GM12878 (cell line): ENCODE measurements at regions of chr6 and their contacts with region 1.

Region 1: DNA sequence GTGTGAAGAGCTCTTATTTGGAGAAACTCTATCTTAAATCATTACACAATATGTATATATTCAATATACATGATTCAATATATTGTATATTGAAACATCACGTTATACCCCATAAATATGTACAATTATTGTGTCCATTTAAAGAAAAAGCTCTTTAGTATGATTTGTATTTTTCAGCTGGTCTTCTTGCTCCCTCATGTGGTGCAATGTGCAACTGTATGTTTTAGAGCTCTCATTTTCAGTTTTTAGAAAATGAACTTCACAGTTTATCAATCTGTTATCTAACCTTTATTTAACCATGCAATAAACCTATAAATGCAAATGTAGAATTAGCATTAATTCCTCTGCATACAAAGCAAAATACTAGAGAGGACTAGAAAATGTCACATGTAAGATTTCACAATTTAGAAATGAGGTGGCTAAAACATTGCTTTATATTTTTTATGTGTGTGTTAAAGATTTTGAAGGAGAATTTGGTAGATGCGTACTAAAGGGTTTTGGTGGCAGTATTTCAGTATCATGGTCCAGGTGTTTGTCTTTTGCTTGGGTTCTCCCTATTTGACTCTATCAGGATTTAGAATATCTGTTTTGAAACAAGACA is 167.1 kb downstream of the PHF3 start:
- DNase-seq: no peak
- ATAC-seq: peak; percentile 43; the same call in 1 of the 3 replicates
- H3K4me3 ChIP-seq: no peak overlapping the region
- H3K27ac ChIP-seq: no peak overlapping the region
- H3K4me1 ChIP-seq: no peaks in the 10 kb centered on the region
- H3K27me3 ChIP-seq: no peaks in the 10 kb centered on the region
- CTCF ChIP-seq: peak; percentile 54 to 64 (median 60); a peak in 5 of 6 replicates
- EP300 ChIP-seq: no peak
- POLR2A ChIP-seq: no peak
- RAD21 ChIP-seq: peak; percentile 89

Region 2: DNA sequence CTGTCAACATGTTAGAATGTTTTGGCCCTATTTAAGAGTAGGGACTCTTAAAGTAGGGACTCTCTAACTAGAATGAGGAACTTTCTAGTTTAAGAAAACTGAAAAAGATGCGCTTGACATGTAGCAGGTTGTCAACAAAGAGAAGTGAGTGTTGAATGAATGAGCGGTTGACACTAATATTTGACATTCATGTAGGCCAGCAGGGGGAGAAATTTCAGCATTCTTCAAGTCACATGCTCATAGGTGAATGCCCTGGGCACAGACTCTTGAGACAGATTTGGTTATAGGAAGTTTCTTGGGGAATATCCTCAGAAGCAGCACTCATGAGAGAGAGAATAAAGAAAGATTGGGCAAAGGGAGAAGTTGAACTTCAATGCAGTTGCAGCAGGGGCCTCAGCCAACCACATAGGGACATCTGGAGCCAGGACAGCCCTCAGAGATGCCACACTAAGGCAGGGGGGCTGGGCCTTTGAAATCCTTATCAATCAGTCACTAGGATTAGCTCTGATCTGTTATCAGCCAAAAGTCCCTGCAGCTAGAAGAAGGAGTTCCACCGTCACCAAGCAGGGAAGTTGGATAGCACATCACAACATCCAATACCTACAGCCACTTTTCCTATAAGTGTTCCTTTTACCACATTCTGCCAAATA is 736.5 kb before region 1 on chr6:
- CTCF ChIA-PET with region 1: no interaction called
- POLR2A ChIA-PET with region 1: no interaction called
- RAD21 ChIA-PET with region 1: no interaction called
- SMC1A ChIA-PET with region 1: no interaction called
- in situ Hi-C with region 1: loop called (anchors 10 kb)
- intact Hi-C with region 1: no loop called
- DNase-seq: no peak
- ATAC-seq: peak; percentile 85
- H3K4me3 ChIP-seq: no peak overlapping the region
- H3K27ac ChIP-seq: no peak overlapping the region
- H3K4me1 ChIP-seq: no peaks in the 10 kb centered on the region
- H3K27me3 ChIP-seq: no peaks in the 10 kb centered on the region
- CTCF ChIP-seq: peak; percentile 29 to 48 (median 33); a peak in 5 of 6 replicates
- EP300 ChIP-seq: no peak
- POLR2A ChIP-seq: no peak
- RAD21 ChIP-seq: peak; percentile 43; the same call in 1 of the 2 replicates

Region 3: GRCh38 chr6:63307581-63308246 is 495.0 kb before region 1 on chr6:
- CTCF ChIA-PET with region 1: interaction called, 28 read pairs
- POLR2A ChIA-PET with region 1: no interaction called
- RAD21 ChIA-PET with region 1: interaction called, 13 read pairs
- SMC1A ChIA-PET with region 1: interaction called, 9 read pairs
- in situ Hi-C with region 1: loop called (anchors 25 kb)
- intact Hi-C with region 1: loop called (anchors 2 kb)
- DNase-seq: peak; percentile 13
- ATAC-seq: peak; percentile 99
- H3K4me3 ChIP-seq: no peak overlapping the region
- H3K27ac ChIP-seq: no peak overlapping the region
- H3K4me1 ChIP-seq: no peaks in the 10 kb centered on the region
- H3K27me3 ChIP-seq: no peaks in the 10 kb centered on the region
- CTCF ChIP-seq: peak; percentile 60 to 70 (median 63)
- EP300 ChIP-seq: no peak
- POLR2A ChIP-seq: no peak
- RAD21 ChIP-seq: peak; percentile 76

Region 4: DNA sequence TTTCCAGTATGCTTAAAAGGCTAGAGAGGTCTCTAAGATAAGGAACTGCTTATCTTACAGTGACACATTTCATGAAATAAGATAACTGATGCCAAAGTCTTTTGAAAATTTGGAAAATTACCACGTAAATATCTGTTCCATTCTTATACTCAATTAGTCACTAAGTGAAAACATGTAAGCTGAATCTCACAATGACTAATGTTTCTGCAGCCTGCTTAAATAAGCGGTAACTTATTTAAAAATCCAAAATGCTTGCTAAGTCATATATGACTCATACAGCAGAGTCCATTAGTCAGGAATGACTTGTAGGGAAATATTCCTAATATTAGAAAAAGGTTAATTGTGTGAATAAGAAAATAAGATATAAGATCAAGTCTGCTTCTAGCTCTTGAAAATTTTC is 455.1 kb before region 1 on chr6:
- CTCF ChIA-PET with region 1: interaction called, 101 read pairs
- POLR2A ChIA-PET with region 1: interaction called, 4 read pairs
- RAD21 ChIA-PET with region 1: interaction called, 71 read pairs
- SMC1A ChIA-PET with region 1: interaction called, 56 read pairs
- in situ Hi-C with region 1: no loop called
- intact Hi-C with region 1: loop called (anchors 2 kb)
- DNase-seq: no peak
- ATAC-seq: peak; percentile 25
- H3K4me3 ChIP-seq: no peak overlapping the region
- H3K27ac ChIP-seq: no peak overlapping the region
- H3K4me1 ChIP-seq: peaks cover 11% of the 10 kb centered on the region
- H3K27me3 ChIP-seq: no peaks in the 10 kb centered on the region
- CTCF ChIP-seq: no peak
- EP300 ChIP-seq: no peak
- POLR2A ChIP-seq: no peak
- RAD21 ChIP-seq: no peak

Region 5: GRCh38 chr6:63529498-63529897 is 273.2 kb before region 1 on chr6:
- CTCF ChIA-PET with region 1: no interaction called
- POLR2A ChIA-PET with region 1: no interaction called
- RAD21 ChIA-PET with region 1: no interaction called
- SMC1A ChIA-PET with region 1: no interaction called
- in situ Hi-C with region 1: no loop called
- intact Hi-C with region 1: no loop called
- DNase-seq: no peak
- ATAC-seq: peak; percentile 74
- H3K4me3 ChIP-seq: no peak overlapping the region; the same call in 1 of the 2 replicates
- H3K27ac ChIP-seq: no peak overlapping the region
- H3K4me1 ChIP-seq: peaks cover 16% of the 10 kb centered on the region
- H3K27me3 ChIP-seq: no peaks in the 10 kb centered on the region
- CTCF ChIP-seq: no peak
- EP300 ChIP-seq: no peak; a peak in 1 of 4 replicates
- POLR2A ChIP-seq: no peak
- RAD21 ChIP-seq: no peak

Region 6: DNA sequence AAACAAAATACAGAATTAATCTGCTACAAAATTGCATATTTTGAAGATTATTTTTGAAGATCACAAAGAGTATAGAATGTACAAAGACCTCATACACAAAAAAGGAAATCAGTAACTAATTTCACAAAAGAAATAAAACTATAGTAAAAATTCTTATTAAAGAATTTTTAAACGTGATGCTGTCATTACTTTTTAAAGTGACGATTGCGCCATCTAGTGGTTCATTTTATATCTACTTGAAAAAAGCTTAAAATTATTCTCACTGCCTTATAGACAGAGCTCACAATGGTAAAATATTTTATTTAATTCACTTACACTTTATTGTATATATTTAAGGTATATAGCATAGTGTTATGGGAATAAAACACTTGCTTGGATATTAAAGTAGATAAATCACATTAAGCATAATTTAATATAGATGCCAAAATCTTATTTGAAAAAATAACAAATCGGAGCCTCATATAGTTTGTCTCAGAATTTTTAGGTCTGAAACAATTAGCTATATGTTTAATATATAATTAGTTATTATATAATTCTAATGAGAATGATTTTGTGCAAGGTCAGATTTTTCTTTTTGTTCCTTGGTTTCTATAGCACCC is 38.3 kb before region 1 on chr6:
- CTCF ChIA-PET with region 1: interaction called, 23 read pairs
- POLR2A ChIA-PET with region 1: no interaction called
- RAD21 ChIA-PET with region 1: interaction called, 28 read pairs
- SMC1A ChIA-PET with region 1: interaction called, 16 read pairs
- in situ Hi-C with region 1: no loop called
- intact Hi-C with region 1: no loop called
- DNase-seq: peak; percentile 5
- ATAC-seq: peak; percentile 64
- H3K4me3 ChIP-seq: no peak overlapping the region
- H3K27ac ChIP-seq: no peak overlapping the region
- H3K4me1 ChIP-seq: no peaks in the 10 kb centered on the region
- H3K27me3 ChIP-seq: no peaks in the 10 kb centered on the region
- CTCF ChIP-seq: no peak; a peak in 2 of 6 replicates
- EP300 ChIP-seq: no peak
- POLR2A ChIP-seq: no peak
- RAD21 ChIP-seq: peak; percentile 63

Region 7: GRCh38 chr6:63783096-63783495 is 19.6 kb before region 1 on chr6:
- CTCF ChIA-PET with region 1: interaction called, 7 read pairs
- POLR2A ChIA-PET with region 1: no interaction called
- RAD21 ChIA-PET with region 1: interaction called, 11 read pairs
- SMC1A ChIA-PET with region 1: interaction called, 7 read pairs
- in situ Hi-C with region 1: no loop called
- intact Hi-C with region 1: no loop called
- DNase-seq: no peak
- ATAC-seq: peak; percentile 39
- H3K4me3 ChIP-seq: no peak overlapping the region
- H3K27ac ChIP-seq: no peak overlapping the region
- H3K4me1 ChIP-seq: peaks cover 8% of the 10 kb centered on the region
- H3K27me3 ChIP-seq: no peaks in the 10 kb centered on the region
- CTCF ChIP-seq: no peak
- EP300 ChIP-seq: no peak
- POLR2A ChIP-seq: no peak
- RAD21 ChIP-seq: no peak

Region 8: GRCh38 chr6:63816982-63817436 is 14.3 kb after region 1 on chr6:
- CTCF ChIA-PET with region 1: interaction called, 19 read pairs
- POLR2A ChIA-PET with region 1: no interaction called
- RAD21 ChIA-PET with region 1: interaction called, 5 read pairs
- SMC1A ChIA-PET with region 1: interaction called, 5 read pairs
- in situ Hi-C with region 1: no loop called
- intact Hi-C with region 1: no loop called
- DNase-seq: no peak
- ATAC-seq: peak; percentile 83
- H3K4me3 ChIP-seq: no peak overlapping the region
- H3K27ac ChIP-seq: no peak overlapping the region
- H3K4me1 ChIP-seq: no peaks in the 10 kb centered on the region
- H3K27me3 ChIP-seq: peaks cover 0 to 3% of the 10 kb centered on the region in 2 experiments; a peak in 1 of 4 replicates
- CTCF ChIP-seq: peak; percentile 6 to 31 (median 22); a peak in 2 of 6 replicates
- EP300 ChIP-seq: no peak
- POLR2A ChIP-seq: no peak
- RAD21 ChIP-seq: 0 out of 2 replicates have a peak, but pooled peaks have one; percentile 6